ENCODE measurements at regions of chr2 and their contacts with region 1.

Region 1: GRCh38 chr2:190528521-190529001 is 6.0 kb downstream of the NEMP2 start:
- DNase-seq: no peak
- H3K4me3 ChIP-seq: no peak overlapping the region
- H3K27ac ChIP-seq: no peak overlapping the region
- H3K27me3 ChIP-seq: no peaks in the 10 kb centered on the region
- CTCF ChIP-seq: no peak

Region 2: GRCh38 chr2:190599073-190599472 is 70.5 kb after region 1 on chr2:
- intact Hi-C with region 1: no loop called
- DNase-seq: no peak
- H3K4me3 ChIP-seq: no peak overlapping the region
- H3K27ac ChIP-seq: peak overlapping the region in 2 of 59 donors; percentile 2
- H3K27me3 ChIP-seq: no peaks in the 10 kb centered on the region
- CTCF ChIP-seq: no peak

Region 3: GRCh38 chr2:190683802-190684201 is 155.2 kb after region 1 on chr2:
- intact Hi-C with region 1: no loop called
- DNase-seq: no peak
- H3K4me3 ChIP-seq: no peak overlapping the region
- H3K27ac ChIP-seq: peak overlapping the region in 32 of 59 donors; percentile 4 to 78 (median 49)
- H3K27me3 ChIP-seq: no peaks in the 10 kb centered on the region
- CTCF ChIP-seq: no peak

Region 4: DNA sequence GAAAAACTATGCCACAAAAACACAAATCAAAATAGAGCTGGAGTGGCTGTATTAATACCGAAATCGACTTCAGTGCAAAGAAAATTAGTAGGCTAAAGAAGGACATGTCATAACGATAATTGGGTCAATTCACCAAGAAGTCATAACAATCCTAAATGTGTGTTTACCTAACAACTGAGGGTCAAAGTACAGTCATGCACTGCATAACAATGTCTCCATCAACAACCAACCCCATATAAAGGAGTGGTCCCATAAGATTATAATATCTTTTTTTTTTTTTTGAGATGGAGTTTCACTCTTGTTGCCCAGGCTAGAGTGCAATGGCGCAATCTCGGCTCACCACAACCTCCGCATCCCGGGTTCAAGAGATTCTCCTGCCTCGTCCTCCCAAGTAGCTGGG is 207.8 kb after region 1 on chr2:
- intact Hi-C with region 1: no loop called
- DNase-seq: no peak
- H3K4me3 ChIP-seq: no peak overlapping the region
- H3K27ac ChIP-seq: no peak overlapping the region
- H3K27me3 ChIP-seq: no peaks in the 10 kb centered on the region
- CTCF ChIP-seq: no peak

Region 5: GRCh38 chr2:190880378-190881073 is 352.0 kb after region 1 on chr2 and contains the start of gene GLS:
- intact Hi-C with region 1: loop called in 1 of 2 experiments (anchors 5 kb)
- DNase-seq: peak; percentile 94 to 99 (median 98)
- H3K4me3 ChIP-seq: peak within 1 kb of the TSS; percentile 72 to 98 (median 89)
- H3K27ac ChIP-seq: peak within 1 kb of the TSS; percentile 76 to 99 (median 96)
- H3K27me3 ChIP-seq: no peaks in the 10 kb centered on the region
- CTCF ChIP-seq: peak in 1 of 56 donors; percentile 12
- total RNA-seq, gene GLS: 130 to 387 (median 309) TPM